Activated CD4-positive, alpha-beta T cell treated with anti-CD3 and anti-CD28 coated beads, Interleukin-2, amount 10 ng/mL, durations not matched to agents 24 days and 14 days (primary cell): ENCODE measurements at regions of chr11 and their contacts with region 1.

Region 1: GRCh38 chr11:61041755-61042518 is 60.4 kb upstream of the CD5 start:
- DNase-seq: peak; percentile 97
- H3K4me3 Mint-ChIP-seq: peak overlapping the region; percentile 80
- H3K27ac Mint-ChIP-seq: peak overlapping the region; percentile 98
- H3K4me1 Mint-ChIP-seq: peaks cover 57% of the 10 kb centered on the region
- H3K27me3 Mint-ChIP-seq: no peaks in the 10 kb centered on the region

Region 2: DNA sequence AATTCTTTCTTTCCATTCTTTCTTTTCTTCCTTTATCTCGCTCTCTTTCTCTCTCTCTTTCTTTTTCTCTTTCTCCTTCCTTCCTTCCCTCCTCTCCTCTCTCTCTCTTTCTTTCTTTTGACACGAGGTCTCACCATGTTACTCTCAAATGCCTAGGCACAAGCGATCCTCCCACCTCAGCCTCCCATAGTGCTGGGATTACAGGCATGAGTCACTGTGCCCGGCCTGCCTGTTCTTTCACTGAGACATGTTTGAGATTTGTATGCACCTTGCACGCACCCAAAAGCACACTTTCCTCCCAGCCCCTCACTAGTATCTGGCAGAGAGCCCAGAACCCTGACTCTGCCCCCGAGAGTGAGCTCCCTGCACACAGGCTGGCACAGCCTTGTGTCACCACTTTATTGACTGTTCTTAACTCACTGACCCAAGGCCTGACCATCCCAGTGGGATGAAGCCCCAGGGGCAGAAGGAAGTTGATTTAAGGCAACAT is 13.6 kb before region 1 on chr11:
- intact Hi-C with region 1: loop called (anchors 1 kb)
- DNase-seq: peak; percentile 83
- H3K4me3 Mint-ChIP-seq: peak overlapping the region; percentile 88
- H3K27ac Mint-ChIP-seq: peak overlapping the region; percentile 97
- H3K4me1 Mint-ChIP-seq: peaks cover 77% of the 10 kb centered on the region
- H3K27me3 Mint-ChIP-seq: no peaks in the 10 kb centered on the region

Region 3: GRCh38 chr11:61054927-61055562 is 13.1 kb after region 1 on chr11:
- intact Hi-C with region 1: loop called (anchors 1 kb)
- DNase-seq: no peak
- H3K4me3 Mint-ChIP-seq: peak overlapping the region; percentile 50
- H3K27ac Mint-ChIP-seq: peak overlapping the region; percentile 92
- H3K4me1 Mint-ChIP-seq: peaks cover 65% of the 10 kb centered on the region
- H3K27me3 Mint-ChIP-seq: no peaks in the 10 kb centered on the region